CD8-positive, alpha-beta T cell (primary cell): ENCODE measurements at regions of chr17 and their contacts with region 1.

Region 1: DNA sequence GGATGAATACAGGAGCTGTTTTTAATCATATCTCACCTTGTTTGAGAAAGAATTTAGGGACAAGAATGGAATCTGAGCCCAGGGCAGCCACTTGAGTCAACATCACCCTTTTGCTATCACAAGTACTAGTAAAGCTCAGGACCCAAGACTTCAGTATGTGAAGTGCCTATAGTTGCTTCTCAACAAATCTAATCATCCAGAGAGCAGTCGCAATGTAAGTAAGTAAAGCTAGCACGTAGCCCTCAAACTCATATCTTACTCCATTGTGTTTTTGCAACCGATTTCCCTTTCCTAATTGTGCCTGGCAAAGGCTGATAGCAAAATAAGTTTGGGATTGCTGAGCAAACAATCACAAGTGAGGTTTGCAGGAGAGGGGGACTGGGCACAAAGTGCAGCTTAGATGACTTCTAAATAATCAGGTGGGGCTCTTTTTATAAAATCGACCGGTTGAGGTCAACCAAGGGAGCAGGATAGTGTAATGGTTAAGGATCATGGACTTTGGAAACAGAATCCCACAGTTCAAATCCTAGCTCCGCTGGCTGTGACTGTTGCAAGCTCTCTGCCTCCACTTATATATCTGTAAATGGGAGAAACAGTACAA is 13.0 kb downstream of the TOB1 start:
- DNase-seq: peak in 2 of 9 experiments; percentile 6 to 25
- ATAC-seq: no peak
- H3K4me3 ChIP-seq: no peak overlapping the region
- H3K4me3 Mint-ChIP-seq: peak overlapping the region; percentile 77
- H3K27ac ChIP-seq: no peak overlapping the region
- H3K27ac Mint-ChIP-seq: peak overlapping the region; percentile 91
- H3K4me1 ChIP-seq: peaks cover 9% of the 10 kb centered on the region
- H3K4me1 Mint-ChIP-seq: peaks cover 15% of the 10 kb centered on the region
- H3K27me3 ChIP-seq: no peaks in the 10 kb centered on the region
- H3K27me3 Mint-ChIP-seq: no peaks in the 10 kb centered on the region
- CTCF ChIP-seq: no peak

Region 2: GRCh38 chr17:50834429-50835300 is 18.4 kb before region 1 on chr17:
- CTCF ChIA-PET with region 1: interaction called, 11 read pairs
- POLR2A ChIA-PET with region 1: no interaction called
- intact Hi-C with region 1: no loop called
- DNase-seq: no peak
- ATAC-seq: no peak
- H3K4me3 ChIP-seq: no peak overlapping the region
- H3K4me3 Mint-ChIP-seq: no peak overlapping the region
- H3K27ac ChIP-seq: no peak overlapping the region
- H3K27ac Mint-ChIP-seq: no peak overlapping the region
- H3K4me1 ChIP-seq: no peaks in the 10 kb centered on the region
- H3K4me1 Mint-ChIP-seq: no peaks in the 10 kb centered on the region
- H3K27me3 ChIP-seq: no peaks in the 10 kb centered on the region
- H3K27me3 Mint-ChIP-seq: peaks cover 5% of the 10 kb centered on the region
- CTCF ChIP-seq: no peak

Region 3: GRCh38 chr17:50904521-50905459 is 51.7 kb after region 1 on chr17:
- CTCF ChIA-PET with region 1: interaction called, 17 read pairs
- POLR2A ChIA-PET with region 1: interaction called, 11 read pairs
- intact Hi-C with region 1: no loop called
- DNase-seq: peak in 1 of 9 experiments; percentile 29
- ATAC-seq: no peak
- H3K4me3 ChIP-seq: no peak overlapping the region
- H3K4me3 Mint-ChIP-seq: no peak overlapping the region
- H3K27ac ChIP-seq: peak overlapping the region; percentile 46 to 73
- H3K27ac Mint-ChIP-seq: peak overlapping the region; percentile 89
- H3K4me1 ChIP-seq: peaks cover 67% of the 10 kb centered on the region
- H3K4me1 Mint-ChIP-seq: peaks cover 61% of the 10 kb centered on the region
- H3K27me3 ChIP-seq: no peaks in the 10 kb centered on the region
- H3K27me3 Mint-ChIP-seq: no peaks in the 10 kb centered on the region
- CTCF ChIP-seq: no peak

Region 4: DNA sequence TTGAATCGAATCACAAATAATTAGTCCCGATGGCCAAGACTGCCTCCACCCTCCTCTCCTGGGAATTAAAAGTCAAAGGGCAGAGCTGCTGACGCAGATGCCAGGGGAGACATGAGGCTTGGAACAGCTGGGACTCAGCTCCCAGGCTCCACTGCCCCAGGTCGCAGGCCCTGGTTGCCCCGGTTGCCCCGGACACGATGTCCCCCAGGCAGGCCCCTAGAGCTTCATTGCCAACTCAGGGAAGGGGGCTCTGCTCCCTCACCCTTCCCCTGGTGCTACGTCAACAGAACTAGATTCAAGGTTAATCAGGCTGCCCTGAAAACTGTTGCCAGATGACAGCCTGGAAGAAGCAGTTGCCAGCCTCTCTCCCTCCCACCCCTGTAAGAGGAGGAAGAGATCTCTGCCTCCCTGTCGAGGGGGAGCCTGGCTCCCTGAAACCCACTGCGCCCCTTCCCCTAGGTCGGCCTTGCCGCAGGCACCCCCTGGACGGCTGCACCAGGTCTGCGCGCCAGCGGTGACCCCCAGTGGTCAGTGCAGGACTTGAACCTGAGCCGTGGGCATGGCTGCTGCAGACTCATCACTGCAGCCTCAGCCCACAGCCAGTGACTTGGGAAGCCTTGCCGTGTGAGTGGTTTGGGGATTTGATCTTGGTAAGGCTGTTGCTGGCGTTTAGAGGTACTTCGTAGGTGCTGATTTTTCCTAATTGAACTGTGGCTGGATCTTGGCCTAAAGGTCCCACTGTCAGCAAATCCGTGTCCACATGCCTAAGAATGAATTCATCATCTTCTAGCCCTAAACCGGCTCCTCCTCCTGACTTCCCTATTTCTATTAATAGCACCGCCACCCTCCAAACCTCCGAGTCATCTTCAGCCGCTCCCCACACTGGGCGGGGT is 97.1 kb after region 1 on chr17:
- CTCF ChIA-PET with region 1: interaction called, 761 read pairs
- POLR2A ChIA-PET with region 1: interaction called, 15 read pairs
- intact Hi-C with region 1: loop called in 1 of 2 experiments (anchors 1 kb)
- DNase-seq: peak; percentile 32 to 80 (median 60)
- ATAC-seq: peak; percentile 87
- H3K4me3 ChIP-seq: no peak overlapping the region
- H3K4me3 Mint-ChIP-seq: no peak overlapping the region
- H3K27ac ChIP-seq: no peak overlapping the region
- H3K27ac Mint-ChIP-seq: no peak overlapping the region
- H3K4me1 ChIP-seq: peaks cover 12% of the 10 kb centered on the region
- H3K4me1 Mint-ChIP-seq: peaks cover 22% of the 10 kb centered on the region
- H3K27me3 ChIP-seq: no peaks in the 10 kb centered on the region
- H3K27me3 Mint-ChIP-seq: no peaks in the 10 kb centered on the region
- CTCF ChIP-seq: peak; percentile 49

Region 5: DNA sequence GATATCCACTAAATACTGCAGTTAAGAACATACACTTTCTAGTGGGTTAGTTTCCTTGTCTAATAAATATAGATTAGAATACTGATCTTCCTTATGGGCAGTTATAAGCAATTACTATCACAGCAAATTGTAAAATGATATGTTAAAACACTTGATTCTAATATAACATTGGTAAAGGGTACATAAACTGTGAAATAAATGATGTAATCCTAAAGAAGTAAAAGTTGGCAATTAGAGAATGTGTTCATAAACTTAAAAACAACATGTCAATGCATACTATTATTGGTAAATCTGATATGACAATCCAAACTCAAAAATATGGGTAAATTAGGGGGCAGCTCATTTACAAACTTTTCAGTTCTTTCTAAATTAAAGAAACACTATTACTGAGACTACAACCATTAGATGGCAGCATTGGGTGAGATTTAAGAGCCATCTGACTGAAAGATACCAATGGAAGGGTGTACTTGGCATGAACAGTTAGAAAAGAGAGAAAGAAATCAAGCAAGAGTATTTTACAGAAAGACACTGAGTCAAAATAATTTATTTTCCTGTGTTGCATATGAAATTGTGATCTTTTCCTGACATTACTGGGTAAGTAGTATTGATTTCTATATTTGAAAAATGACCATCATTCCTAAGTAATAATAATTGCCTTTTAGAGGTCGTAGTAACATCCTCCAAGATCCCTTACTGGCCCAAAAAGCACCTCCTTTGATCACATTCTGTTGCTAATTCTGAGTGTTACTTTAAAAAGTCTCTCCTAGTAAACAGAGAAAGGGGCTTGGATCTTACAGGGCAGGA is 147.9 kb after region 1 on chr17:
- CTCF ChIA-PET with region 1: interaction called, 18 read pairs
- POLR2A ChIA-PET with region 1: no interaction called
- intact Hi-C with region 1: no loop called
- DNase-seq: peak in 3 of 9 experiments; percentile 14 to 81 (median 74)
- ATAC-seq: peak; percentile 88
- H3K4me3 ChIP-seq: no peak overlapping the region
- H3K4me3 Mint-ChIP-seq: no peak overlapping the region
- H3K27ac ChIP-seq: no peak overlapping the region
- H3K27ac Mint-ChIP-seq: no peak overlapping the region
- H3K4me1 ChIP-seq: no peaks in the 10 kb centered on the region
- H3K4me1 Mint-ChIP-seq: peaks cover 5% of the 10 kb centered on the region
- H3K27me3 ChIP-seq: no peaks in the 10 kb centered on the region
- H3K27me3 Mint-ChIP-seq: no peaks in the 10 kb centered on the region
- CTCF ChIP-seq: peak; percentile 76